Esophagus muscularis mucosa (tissue), 4 donors: ENCODE measurements at regions of chr14 and their contacts with region 1.

Region 1: DNA sequence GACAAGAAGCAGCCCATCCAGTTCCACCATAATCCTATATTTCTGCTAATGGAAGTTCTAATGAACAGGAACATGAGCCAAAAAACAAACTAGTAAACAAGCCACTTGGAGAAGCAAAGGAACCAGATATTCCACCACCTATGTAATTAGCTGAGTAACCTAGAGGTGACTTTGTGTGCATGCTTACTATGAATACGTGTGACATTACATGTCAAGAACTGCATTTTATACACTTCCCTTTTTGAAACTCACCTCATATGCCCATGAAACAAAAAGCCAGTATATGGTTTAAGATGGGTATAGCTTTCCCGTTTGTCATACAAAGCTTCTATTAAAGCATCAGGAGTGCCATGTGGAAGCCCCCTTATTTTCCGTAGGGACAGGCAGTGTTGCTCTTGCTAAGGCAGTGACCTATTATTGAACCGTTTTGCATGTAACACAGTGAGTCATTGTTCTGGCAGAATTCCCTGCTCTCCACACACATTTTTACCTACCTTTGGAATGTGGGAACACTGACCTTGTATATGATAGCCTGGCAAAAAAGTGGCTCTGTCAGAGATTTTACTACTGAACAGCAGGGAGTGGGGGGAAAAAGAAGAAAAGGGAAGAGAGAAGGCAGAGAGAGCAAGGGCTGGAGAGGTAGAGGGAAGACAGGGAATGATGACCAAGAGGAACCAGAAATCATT is 34.8 kb upstream of the FRMD6 start:
- DNase-seq: no peak
- H3K4me3 ChIP-seq: no peak overlapping the region
- H3K27ac ChIP-seq: no peak overlapping the region
- H3K4me1 ChIP-seq: peaks cover 5 to 17% (median 12%) of the 10 kb centered on the region in 4 donors
- H3K27me3 ChIP-seq: no peaks in the 10 kb centered on the region
- CTCF ChIP-seq: no peak
- EP300 ChIP-seq: no peak
- POLR2A ChIP-seq: no peak

Region 2: GRCh38 chr14:51554953-51555352 is 61.9 kb before region 1 on chr14:
- intact Hi-C with region 1: loop called (anchors 10 kb)
- DNase-seq: no peak
- H3K4me3 ChIP-seq: no peak overlapping the region
- H3K27ac ChIP-seq: no peak overlapping the region
- H3K4me1 ChIP-seq: peaks cover 0 to 15% (median 9%) of the 10 kb centered on the region in 4 donors
- H3K27me3 ChIP-seq: no peaks in the 10 kb centered on the region
- CTCF ChIP-seq: no peak
- EP300 ChIP-seq: no peak
- POLR2A ChIP-seq: no peak